ENCODE measurements at regions of chr17 and their contacts with region 1.

Region 1: GRCh38 chr17:6413065-6413464 is 21.9 kb downstream of the AIPL1 start:
- DNase-seq: no peak
- ATAC-seq: peak in 1 of 8 donors; percentile 19
- H3K4me3 ChIP-seq: no peak overlapping the region
- H3K27ac ChIP-seq: no peak overlapping the region
- H3K4me1 ChIP-seq: no peaks in the 10 kb centered on the region
- H3K27me3 ChIP-seq: peaks cover 0 to 18% (median 3%) of the 10 kb centered on the region in 7 donors
- CTCF ChIP-seq: peak in 7 of 9 donors; percentile 27 to 52 (median 35)

Region 2: DNA sequence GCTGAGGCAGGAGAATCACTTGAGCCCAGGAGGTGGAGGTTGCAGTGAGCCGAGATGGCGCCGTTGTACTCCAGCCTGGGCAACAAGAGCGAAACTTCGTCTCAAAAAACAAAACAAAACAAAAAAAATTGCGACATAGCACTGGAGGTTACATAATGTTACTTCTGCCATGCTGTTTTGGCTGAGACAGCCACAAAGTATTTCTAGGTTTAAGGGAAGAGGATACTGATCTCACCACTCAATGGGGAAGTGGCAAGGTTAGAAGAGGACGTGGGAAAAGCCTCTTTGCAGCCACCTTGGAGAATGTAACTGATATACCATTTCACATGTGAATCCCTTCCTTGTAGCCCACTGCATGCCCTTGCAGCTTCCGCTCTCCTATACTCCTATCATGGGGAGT is 697.6 kb before region 1 on chr17:
- intact Hi-C with region 1: loop called in 1 of 10 experiments (anchors 10 kb)
- DNase-seq: no peak
- ATAC-seq: peak in 1 of 8 donors; percentile 63
- H3K4me3 ChIP-seq: no peak overlapping the region
- H3K27ac ChIP-seq: no peak overlapping the region
- H3K4me1 ChIP-seq: peaks cover 0 to 7% (median 0%) of the 10 kb centered on the region in 9 donors
- H3K27me3 ChIP-seq: peaks cover 0 to 81% (median 65%) of the 10 kb centered on the region in 7 donors
- CTCF ChIP-seq: no peak

Region 3: DNA sequence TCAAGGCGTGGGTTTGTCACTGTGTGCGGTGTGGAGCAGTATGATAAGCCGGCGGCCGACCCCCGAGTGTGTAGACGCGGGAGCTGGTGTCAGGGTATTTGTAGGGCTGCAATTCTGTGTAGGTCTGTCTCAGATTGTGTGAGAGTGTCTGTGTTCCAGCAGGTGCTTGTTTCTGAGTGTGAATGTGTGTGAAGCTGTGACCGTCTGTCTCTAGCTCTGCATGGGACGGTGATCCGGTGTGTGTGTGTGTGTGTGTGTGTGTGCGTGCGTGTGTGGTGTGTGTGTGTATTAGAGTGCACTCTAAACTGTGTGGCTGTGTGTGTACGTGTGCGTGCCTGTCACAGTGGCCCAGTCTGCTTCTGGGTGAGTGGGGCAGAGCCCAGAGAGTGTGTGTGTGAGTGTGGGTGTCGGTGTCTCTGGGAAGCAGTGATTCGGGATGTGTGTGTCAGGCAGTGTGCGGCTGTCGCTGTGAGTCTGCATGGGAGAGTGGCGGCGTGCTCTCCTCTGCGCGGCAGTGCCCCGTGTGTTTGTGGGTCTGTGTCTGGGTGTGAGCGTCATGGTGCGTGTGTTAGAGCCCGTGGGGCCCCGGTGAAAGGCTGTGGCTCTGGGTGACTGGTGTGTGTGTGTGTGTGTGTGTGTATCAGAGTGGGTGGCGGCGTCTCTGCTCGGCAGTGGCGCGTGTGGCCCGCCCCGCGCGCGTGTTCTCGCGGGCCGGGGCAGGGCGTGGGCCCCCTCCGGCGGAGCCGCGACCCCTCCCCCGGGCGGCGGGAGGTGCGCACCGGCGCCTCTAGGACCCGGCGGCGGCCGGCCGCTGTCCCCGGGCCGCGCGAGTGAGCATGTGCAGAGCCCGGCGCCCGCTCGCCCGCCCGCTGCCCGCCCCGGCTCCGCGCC is 343.3 kb before region 1 on chr17 and contains the start of gene WSCD1:
- intact Hi-C with region 1: loop called in 3 of 10 experiments (anchors 10 kb)
- DNase-seq: peak in 1 of 2 donors; percentile 42
- ATAC-seq: peak; percentile 27 to 81 (median 66)
- H3K4me3 ChIP-seq: peak within 1 kb of the TSS; percentile 38 to 81 (median 63)
- H3K27ac ChIP-seq: peak within 1 kb of the TSS in 5 of 10 donors; percentile 12 to 64 (median 44)
- H3K4me1 ChIP-seq: peaks cover 0 to 12% (median 7%) of the 10 kb centered on the region in 9 donors
- H3K27me3 ChIP-seq: peaks cover 0 to 52% (median 32%) of the 10 kb centered on the region in 7 donors
- CTCF ChIP-seq: no peak
- total RNA-seq, gene WSCD1: 3.4 to 13.8 (median 4.2) TPM